GM12878 (cell line): ENCODE measurements at regions of chr18 and their contacts with region 1.

Region 1: DNA sequence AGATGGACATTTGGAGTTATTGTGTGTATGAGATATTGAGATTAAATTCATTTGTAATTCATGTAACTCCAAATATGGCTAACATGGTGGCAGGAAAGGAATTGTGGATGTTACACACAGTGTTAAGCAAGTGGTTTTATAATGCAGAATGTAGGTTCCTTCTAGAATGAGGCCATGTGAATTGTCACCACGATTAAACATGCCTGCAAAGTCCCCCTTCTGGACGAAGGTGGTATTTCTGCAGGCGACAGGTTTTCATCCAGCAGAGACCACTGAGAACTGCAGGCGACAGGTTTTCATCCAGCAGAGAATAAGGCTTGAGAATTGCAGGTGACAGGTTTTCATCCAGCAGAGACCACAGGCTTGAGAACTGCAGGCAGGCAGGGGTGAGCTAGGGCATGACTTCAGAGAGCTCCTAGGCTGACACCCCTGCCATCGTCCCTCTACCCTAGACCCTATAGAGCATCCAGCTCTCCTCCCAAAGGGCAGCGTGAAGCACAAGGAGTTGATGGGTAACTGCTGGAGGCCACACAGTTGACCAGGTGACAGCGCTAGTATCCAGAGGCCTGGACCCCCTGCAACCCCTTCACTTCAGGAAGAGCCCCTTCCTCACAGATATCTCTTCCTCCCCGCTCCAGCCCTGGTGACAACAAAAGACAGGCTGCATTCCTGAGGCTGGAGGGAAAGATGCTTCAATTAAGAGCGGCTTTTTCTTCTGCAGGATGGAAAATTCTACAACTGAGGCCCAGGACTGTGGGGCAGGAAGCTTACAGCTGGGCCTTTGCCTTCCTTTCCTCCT is 175.8 kb downstream of the LOXHD1 start:
- DNase-seq: no peak
- ATAC-seq: peak; percentile 77
- H3K4me3 ChIP-seq: no peak overlapping the region
- H3K27ac ChIP-seq: no peak overlapping the region
- H3K4me1 ChIP-seq: no peaks in the 10 kb centered on the region
- H3K27me3 ChIP-seq: peaks cover 0 to 6% of the 10 kb centered on the region in 2 experiments; a peak in 2 of 4 replicates
- CTCF ChIP-seq: peak; percentile 54 to 76 (median 69)
- EP300 ChIP-seq: no peak
- POLR2A ChIP-seq: no peak
- RAD21 ChIP-seq: peak; percentile 67

Region 2: DNA sequence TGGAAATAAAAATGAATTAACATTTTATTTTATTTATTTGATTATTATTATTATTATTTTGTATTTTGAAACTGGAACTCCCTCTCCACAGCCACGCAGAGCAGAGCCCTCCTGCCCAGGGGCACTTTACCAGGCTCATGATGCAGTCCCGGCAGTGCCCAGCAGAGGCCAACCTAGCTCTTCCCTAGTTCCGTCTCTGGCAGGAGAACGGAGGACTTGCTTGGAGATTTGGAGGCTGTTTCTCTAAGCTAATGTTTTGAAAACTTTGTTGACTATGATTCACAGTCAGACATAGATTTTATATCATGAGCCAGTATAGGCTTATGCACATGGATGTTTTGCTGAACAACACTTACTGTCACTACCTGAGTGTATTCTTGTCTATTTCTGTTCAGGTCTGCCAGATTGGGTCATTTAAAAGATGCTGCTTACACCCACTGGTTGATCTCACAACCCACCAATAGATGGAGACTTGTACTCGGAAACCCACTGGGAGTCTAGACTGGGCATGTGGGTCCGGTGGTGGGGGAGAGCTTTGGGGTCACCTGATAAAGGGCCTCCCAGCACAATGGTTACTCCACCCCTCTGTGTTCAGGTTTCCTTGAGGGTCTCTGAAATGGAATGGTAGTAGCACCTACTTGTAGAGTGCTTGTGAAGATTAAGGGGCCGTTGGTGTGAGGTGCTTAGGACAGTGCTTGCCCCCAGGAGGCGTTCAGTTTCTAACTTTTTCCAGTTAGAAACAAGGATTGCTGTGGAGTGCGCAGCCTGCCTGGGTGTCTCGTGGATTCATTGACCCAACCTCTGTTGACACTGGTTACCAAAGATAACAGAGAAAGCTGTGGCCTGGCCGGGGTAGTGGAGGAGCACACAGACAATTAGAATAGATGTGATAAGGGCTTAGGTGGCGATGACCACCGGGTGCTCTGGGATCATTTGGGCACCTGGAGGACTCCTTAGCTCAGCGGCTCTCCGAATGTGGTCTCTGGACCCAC is 199.8 kb before region 1 on chr18:
- CTCF ChIA-PET with region 1: interaction called, 27 read pairs
- POLR2A ChIA-PET with region 1: no interaction called
- RAD21 ChIA-PET with region 1: interaction called, 11 read pairs
- SMC1A ChIA-PET with region 1: interaction called, 10 read pairs
- in situ Hi-C with region 1: loop called (anchors 10 kb)
- intact Hi-C with region 1: loop called (anchors 1 kb)
- DNase-seq: no peak
- ATAC-seq: peak; percentile 96
- H3K4me3 ChIP-seq: no peak overlapping the region
- H3K27ac ChIP-seq: no peak overlapping the region
- H3K4me1 ChIP-seq: no peaks in the 10 kb centered on the region
- H3K27me3 ChIP-seq: no peaks in the 10 kb centered on the region
- CTCF ChIP-seq: peak; percentile 85 to 97 (median 87)
- EP300 ChIP-seq: no peak
- POLR2A ChIP-seq: no peak
- RAD21 ChIP-seq: peak; percentile 95

Region 3: GRCh38 chr18:46518438-46518837 is 37.2 kb after region 1 on chr18:
- CTCF ChIA-PET with region 1: no interaction called
- POLR2A ChIA-PET with region 1: no interaction called
- RAD21 ChIA-PET with region 1: no interaction called
- SMC1A ChIA-PET with region 1: no interaction called
- in situ Hi-C with region 1: no loop called
- intact Hi-C with region 1: no loop called
- DNase-seq: no peak
- ATAC-seq: no peak
- H3K4me3 ChIP-seq: no peak overlapping the region
- H3K27ac ChIP-seq: no peak overlapping the region
- H3K4me1 ChIP-seq: no peaks in the 10 kb centered on the region
- H3K27me3 ChIP-seq: peaks cover 0 to 3% of the 10 kb centered on the region in 2 experiments; a peak in 3 of 4 replicates
- CTCF ChIP-seq: 0 out of 6 replicates have a peak, but pooled peaks of 1 of the 3 experiments have one; percentile 8
- EP300 ChIP-seq: no peak
- POLR2A ChIP-seq: no peak
- RAD21 ChIP-seq: no peak